BJ (cell line): ENCODE measurements at regions of chr1 and their contacts with region 1.

Region 1: GRCh38 chr1:119870917-119871596 is 25.3 kb downstream of the ADAM30 start:
- DNase-seq: no peak
- H3K4me3 ChIP-seq: no peak overlapping the region
- H3K27me3 ChIP-seq: no peaks in the 10 kb centered on the region
- CTCF ChIP-seq: peak; percentile 98

Region 2: DNA sequence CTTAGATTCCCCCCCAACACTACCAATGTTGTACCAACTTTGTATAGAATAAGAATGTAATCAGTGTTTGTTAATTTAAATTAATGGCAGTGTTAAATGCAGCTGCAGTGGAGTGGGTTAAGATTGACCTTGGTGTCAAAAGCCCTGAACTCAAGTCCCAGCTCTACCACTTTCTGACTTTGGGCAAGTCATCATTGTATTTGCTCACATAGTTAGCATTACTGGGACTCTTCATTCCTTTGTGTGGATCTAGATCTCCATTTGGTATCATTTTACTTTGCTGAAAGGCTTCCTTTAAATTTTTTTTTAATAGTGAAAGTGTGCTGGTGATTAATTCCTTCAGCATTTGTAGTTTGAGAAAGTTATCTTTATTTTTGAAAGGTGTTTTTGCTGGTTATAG is 181.5 kb before region 1 on chr1:
- CTCF ChIA-PET with region 1: no interaction called
- POLR2A ChIA-PET with region 1: no interaction called
- DNase-seq: no peak
- H3K4me3 ChIP-seq: no peak overlapping the region
- H3K27me3 ChIP-seq: no peaks in the 10 kb centered on the region
- CTCF ChIP-seq: no peak

Region 3: GRCh38 chr1:119859647-119860046 is 11.4 kb before region 1 on chr1:
- CTCF ChIA-PET with region 1: interaction called, 17 read pairs
- POLR2A ChIA-PET with region 1: no interaction called
- DNase-seq: no peak
- H3K4me3 ChIP-seq: no peak overlapping the region
- H3K27me3 ChIP-seq: no peaks in the 10 kb centered on the region
- CTCF ChIP-seq: no peak

Region 4: DNA sequence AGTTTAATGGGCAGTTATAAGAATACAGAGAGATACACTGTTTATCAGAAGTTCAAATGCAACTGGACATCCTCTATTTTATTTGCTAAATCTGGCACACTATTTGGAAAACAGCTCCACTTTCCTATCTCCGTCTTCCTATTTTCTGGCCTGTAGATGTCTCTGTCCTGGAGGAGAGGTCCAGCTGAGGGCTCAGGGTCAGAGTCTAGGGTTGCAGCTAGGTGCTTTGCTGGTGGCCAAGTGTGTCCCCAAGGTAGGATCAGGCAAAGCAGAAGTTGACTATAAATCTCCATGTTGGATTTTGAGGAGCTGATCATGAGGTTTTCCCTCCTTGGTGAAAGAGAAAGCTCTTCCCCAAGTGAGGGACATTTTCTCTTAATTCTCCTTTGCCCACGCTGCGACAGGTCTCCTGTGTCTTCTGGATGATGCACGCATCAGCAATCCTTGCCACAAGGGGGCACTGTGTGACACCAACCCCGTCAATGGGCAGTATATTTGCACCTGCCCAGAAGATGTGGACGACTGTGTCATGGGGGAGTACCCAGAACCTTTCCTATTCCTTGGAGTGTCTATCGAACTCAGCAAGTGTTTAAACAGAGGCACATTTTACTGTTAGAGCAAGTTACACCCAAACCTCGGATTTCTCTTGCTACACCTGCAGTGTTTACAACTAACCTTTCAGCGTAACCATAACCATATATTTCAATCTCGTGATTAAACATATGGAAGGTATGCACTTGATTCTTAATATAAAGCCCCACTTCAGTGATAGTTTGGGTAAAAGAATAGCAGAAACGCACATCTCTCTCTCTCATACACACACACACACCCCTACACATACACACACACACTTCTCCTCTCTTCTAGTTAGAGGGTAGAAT is 15.1 kb after region 1 on chr1:
- CTCF ChIA-PET with region 1: interaction called, 29 read pairs
- POLR2A ChIA-PET with region 1: no interaction called
- DNase-seq: no peak
- H3K4me3 ChIP-seq: no peak overlapping the region
- H3K27me3 ChIP-seq: peaks cover 2% of the 10 kb centered on the region; the same call in 1 of the 2 replicates
- CTCF ChIP-seq: peak; percentile 78